Panc1 (cell line): ENCODE measurements at regions of chr16 and their contacts with region 1.

Region 1: GRCh38 chr16:67137605-67138004 is 13.2 kb downstream of the B3GNT9 start:
- DNase-seq: no peak
- ATAC-seq: no peak
- H3K4me3 ChIP-seq: no peak overlapping the region
- H3K27ac ChIP-seq: no peak overlapping the region
- H3K4me1 ChIP-seq: no peaks in the 10 kb centered on the region
- H3K27me3 ChIP-seq: no peaks in the 10 kb centered on the region
- CTCF ChIP-seq: no peak

Region 2: DNA sequence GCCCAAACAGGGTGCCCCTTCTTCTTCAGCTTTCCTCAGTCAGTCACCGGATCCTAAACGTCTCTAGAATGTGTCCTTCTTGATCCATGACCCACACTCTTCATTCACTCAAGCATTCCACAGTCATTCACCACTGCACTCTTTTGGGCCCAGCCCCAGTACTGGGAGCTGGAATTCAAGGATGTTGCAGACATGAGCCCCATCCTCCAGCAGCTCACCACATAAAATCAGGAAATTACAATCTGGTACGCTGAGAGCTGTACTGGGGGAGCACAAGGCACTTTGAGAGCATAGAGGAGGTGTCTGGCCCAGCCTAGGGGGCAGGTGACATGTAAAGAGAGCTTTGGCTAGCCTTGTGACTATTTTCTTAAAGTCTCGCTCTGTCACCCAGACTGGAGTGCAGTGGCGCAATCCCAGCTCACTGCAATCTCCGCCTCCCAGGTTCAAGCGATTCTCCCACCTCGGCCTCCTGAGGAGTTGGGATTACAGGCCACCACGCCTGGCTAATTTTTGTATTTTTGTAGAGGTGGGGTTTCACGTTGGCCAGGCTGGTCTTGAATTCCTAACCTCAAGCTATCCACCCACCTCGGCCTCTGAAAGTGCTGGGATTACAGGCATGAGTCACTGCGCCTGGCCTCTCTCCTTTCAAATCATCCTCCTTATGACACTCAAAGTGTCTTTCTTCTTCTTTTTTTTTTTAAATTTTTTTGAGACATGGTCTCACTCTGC is 130.5 kb before region 1 on chr16:
- CTCF ChIA-PET with region 1: no interaction called
- POLR2A ChIA-PET with region 1: interaction called, 14 read pairs
- in situ Hi-C with region 1: no loop called
- intact Hi-C with region 1: no loop called
- DNase-seq: no peak
- ATAC-seq: no peak
- H3K4me3 ChIP-seq: no peak overlapping the region
- H3K27ac ChIP-seq: no peak overlapping the region
- H3K4me1 ChIP-seq: no peaks in the 10 kb centered on the region
- H3K27me3 ChIP-seq: no peaks in the 10 kb centered on the region
- CTCF ChIP-seq: no peak

Region 3: GRCh38 chr16:67028555-67029248 is 108.9 kb before region 1 on chr16 and contains the start of gene CBFB:
- CTCF ChIA-PET with region 1: no interaction called
- POLR2A ChIA-PET with region 1: no interaction called
- in situ Hi-C with region 1: no loop called
- intact Hi-C with region 1: no loop called
- DNase-seq: peak; percentile 35
- ATAC-seq: peak; percentile 94
- H3K4me3 ChIP-seq: peak within 1 kb of the TSS; percentile 70 to 76
- H3K27ac ChIP-seq: peak within 1 kb of the TSS; percentile 99
- H3K4me1 ChIP-seq: peaks cover 13% of the 10 kb centered on the region
- H3K27me3 ChIP-seq: no peaks in the 10 kb centered on the region
- CTCF ChIP-seq: no peak
- total RNA-seq, gene CBFB: 66.4 TPM

Region 4: GRCh38 chr16:67159593-67160406 is 22.2 kb after region 1 on chr16 and contains the starts of genes FBXL8 and TRADD:
- CTCF ChIA-PET with region 1: no interaction called
- POLR2A ChIA-PET with region 1: no interaction called
- in situ Hi-C with region 1: no loop called
- intact Hi-C with region 1: no loop called
- DNase-seq: peak; percentile 30
- ATAC-seq: peak; percentile 86
- H3K4me3 ChIP-seq: peak within 1 kb of the TSS; percentile 71 to 80
- H3K27ac ChIP-seq: peak within 1 kb of the TSS; percentile 74
- H3K4me1 ChIP-seq: peaks cover 3% of the 10 kb centered on the region; the same call in 1 of the 2 replicates
- H3K27me3 ChIP-seq: no peaks in the 10 kb centered on the region
- CTCF ChIP-seq: peak; percentile 79
- total RNA-seq, gene FBXL8: 17.8 TPM
- total RNA-seq, gene TRADD: 18.5 TPM

Region 5: GRCh38 chr16:67800338-67800926 is 662.8 kb after region 1 on chr16:
- CTCF ChIA-PET with region 1: no interaction called
- POLR2A ChIA-PET with region 1: no interaction called
- in situ Hi-C with region 1: no loop called
- intact Hi-C with region 1: no loop called
- DNase-seq: no peak
- ATAC-seq: no peak
- H3K4me3 ChIP-seq: no peak overlapping the region
- H3K27ac ChIP-seq: no peak overlapping the region
- H3K4me1 ChIP-seq: peaks cover 6% of the 10 kb centered on the region
- H3K27me3 ChIP-seq: no peaks in the 10 kb centered on the region
- CTCF ChIP-seq: no peak